ENCODE measurements at regions of chr21 and their contacts with region 1.

Region 1: DNA sequence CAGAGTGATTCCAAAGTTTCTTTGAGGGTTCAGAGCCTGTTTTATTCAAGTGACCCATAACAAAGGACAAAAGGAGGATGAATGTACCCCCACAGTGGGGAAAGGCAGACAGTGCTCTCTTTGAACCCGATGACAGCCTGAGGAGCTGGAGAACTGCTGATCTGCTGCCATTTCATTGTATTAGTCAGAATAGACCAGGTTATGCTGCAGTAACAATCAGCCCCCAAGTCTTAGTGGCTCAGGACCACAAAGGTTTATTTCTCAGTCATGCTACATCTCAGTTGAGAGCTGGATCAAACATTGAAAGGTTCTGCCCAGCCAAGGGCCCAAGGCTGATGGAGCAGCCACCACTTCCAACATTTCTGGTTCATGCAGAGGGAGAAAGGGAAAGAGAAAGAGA is 88.9 kb downstream of the HUNK start:
- DNase-seq: no peak
- ATAC-seq: no peak
- H3K4me3 ChIP-seq: no peak overlapping the region
- H3K27ac ChIP-seq: no peak overlapping the region
- H3K4me1 ChIP-seq: no peaks in the 10 kb centered on the region
- H3K27me3 ChIP-seq: no peaks in the 10 kb centered on the region
- CTCF ChIP-seq: no peak
- EP300 ChIP-seq: no peak
- POLR2A ChIP-seq: no peak
- RAD21 ChIP-seq: no peak

Region 2: GRCh38 chr21:30289215-30289614 is 1672.5 kb before region 1 on chr21 and contains the start of gene KRTAP25-1:
- CTCF ChIA-PET with region 1: no interaction called
- POLR2A ChIA-PET with region 1: no interaction called
- in situ Hi-C with region 1: no loop called
- intact Hi-C with region 1: no loop called
- DNase-seq: no peak
- ATAC-seq: no peak
- H3K4me3 ChIP-seq: no peak within 1 kb of the TSS
- H3K27ac ChIP-seq: no peak within 1 kb of the TSS
- H3K4me1 ChIP-seq: no peaks in the 10 kb centered on the region
- H3K27me3 ChIP-seq: no peaks in the 10 kb centered on the region
- CTCF ChIP-seq: no peak
- EP300 ChIP-seq: no peak
- POLR2A ChIP-seq: no peak
- RAD21 ChIP-seq: no peak
- total RNA-seq, gene KRTAP25-1: not detected in 2 replicates

Region 3: GRCh38 chr21:31918250-31918775 is 43.4 kb before region 1 on chr21:
- CTCF ChIA-PET with region 1: no interaction called
- POLR2A ChIA-PET with region 1: no interaction called
- in situ Hi-C with region 1: no loop called
- intact Hi-C with region 1: loop called (anchors 1 kb)
- DNase-seq: no peak
- ATAC-seq: no peak
- H3K4me3 ChIP-seq: no peak overlapping the region
- H3K27ac ChIP-seq: no peak overlapping the region
- H3K4me1 ChIP-seq: peaks cover 69% of the 10 kb centered on the region
- H3K27me3 ChIP-seq: no peaks in the 10 kb centered on the region
- CTCF ChIP-seq: no peak
- EP300 ChIP-seq: no peak
- POLR2A ChIP-seq: no peak
- RAD21 ChIP-seq: no peak

Region 4: GRCh38 chr21:31945546-31945945 is 16.2 kb before region 1 on chr21:
- CTCF ChIA-PET with region 1: no interaction called
- POLR2A ChIA-PET with region 1: no interaction called
- in situ Hi-C with region 1: no loop called
- intact Hi-C with region 1: no loop called
- DNase-seq: no peak
- ATAC-seq: no peak
- H3K4me3 ChIP-seq: no peak overlapping the region
- H3K27ac ChIP-seq: no peak overlapping the region
- H3K4me1 ChIP-seq: peaks cover 35% of the 10 kb centered on the region
- H3K27me3 ChIP-seq: no peaks in the 10 kb centered on the region
- CTCF ChIP-seq: no peak
- EP300 ChIP-seq: no peak
- POLR2A ChIP-seq: no peak
- RAD21 ChIP-seq: no peak

Region 5: DNA sequence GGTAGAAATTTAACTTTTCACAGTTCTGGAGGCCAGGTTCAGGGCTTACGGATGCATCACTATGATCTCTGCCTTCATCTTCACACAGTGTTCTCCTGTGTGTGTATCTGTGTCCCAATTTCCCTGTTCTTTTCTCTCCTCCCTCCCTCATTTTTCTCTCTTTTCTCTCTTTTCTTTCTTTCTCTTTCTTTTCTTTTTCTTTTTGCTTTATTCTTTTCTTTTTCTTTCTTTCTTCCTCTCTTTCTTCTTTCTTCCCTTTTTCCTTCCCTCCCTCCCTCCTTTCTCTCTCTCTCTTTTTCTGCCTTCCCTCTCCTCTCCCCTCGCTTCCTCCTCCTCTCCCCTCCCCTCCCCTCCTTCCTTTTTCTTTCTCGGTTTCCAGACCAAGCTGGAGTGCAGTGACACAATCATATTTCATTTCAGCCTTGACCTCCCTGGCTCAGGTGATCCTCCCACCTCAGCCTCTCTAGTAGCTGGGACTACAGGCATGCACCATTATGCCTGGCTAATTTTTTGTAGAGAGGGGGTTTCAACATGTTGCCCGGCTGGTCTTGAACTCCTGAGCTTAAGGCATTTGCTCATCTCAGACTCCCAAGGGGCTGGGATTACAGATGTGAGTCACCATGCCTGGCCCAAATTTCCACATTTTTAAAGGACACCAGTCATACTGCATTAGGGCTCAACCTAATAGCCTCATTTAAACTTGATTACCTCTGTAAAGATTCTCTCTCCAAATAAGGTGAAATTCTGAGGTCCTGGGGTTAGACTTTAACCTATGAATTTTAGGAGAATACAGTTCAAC is 27.0 kb after region 1 on chr21:
- CTCF ChIA-PET with region 1: no interaction called
- POLR2A ChIA-PET with region 1: no interaction called
- in situ Hi-C with region 1: no loop called
- intact Hi-C with region 1: no loop called
- DNase-seq: no peak
- ATAC-seq: no peak
- H3K4me3 ChIP-seq: no peak overlapping the region
- H3K27ac ChIP-seq: no peak overlapping the region
- H3K4me1 ChIP-seq: peaks cover 17% of the 10 kb centered on the region
- H3K27me3 ChIP-seq: no peaks in the 10 kb centered on the region
- CTCF ChIP-seq: no peak
- EP300 ChIP-seq: no peak
- POLR2A ChIP-seq: no peak
- RAD21 ChIP-seq: no peak